Posterior vena cava (tissue), 2 donors: ENCODE measurements at regions of chr18 and their contacts with region 1.

Region 1: DNA sequence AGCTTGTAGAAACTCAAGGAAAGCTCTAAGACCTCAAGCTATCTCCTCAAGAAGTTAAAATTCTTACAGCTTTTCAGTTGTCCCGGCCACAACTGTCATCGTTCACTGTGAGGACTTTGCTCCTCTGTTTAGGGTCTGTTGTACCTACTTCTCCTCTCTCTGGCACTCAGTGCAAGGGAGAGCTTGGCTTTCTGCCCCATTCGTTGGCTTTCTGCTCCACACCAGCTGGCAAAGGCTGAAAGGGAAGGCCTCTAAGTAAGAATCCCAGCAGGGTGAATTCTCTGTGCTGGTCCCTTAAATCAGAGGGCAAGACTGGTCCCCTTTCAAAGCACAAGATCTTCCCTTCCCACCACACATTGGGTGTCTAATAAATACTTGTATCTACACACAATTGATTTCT is 17.3 kb downstream of the ZBTB7C start:
- DNase-seq: no peak

Region 2: DNA sequence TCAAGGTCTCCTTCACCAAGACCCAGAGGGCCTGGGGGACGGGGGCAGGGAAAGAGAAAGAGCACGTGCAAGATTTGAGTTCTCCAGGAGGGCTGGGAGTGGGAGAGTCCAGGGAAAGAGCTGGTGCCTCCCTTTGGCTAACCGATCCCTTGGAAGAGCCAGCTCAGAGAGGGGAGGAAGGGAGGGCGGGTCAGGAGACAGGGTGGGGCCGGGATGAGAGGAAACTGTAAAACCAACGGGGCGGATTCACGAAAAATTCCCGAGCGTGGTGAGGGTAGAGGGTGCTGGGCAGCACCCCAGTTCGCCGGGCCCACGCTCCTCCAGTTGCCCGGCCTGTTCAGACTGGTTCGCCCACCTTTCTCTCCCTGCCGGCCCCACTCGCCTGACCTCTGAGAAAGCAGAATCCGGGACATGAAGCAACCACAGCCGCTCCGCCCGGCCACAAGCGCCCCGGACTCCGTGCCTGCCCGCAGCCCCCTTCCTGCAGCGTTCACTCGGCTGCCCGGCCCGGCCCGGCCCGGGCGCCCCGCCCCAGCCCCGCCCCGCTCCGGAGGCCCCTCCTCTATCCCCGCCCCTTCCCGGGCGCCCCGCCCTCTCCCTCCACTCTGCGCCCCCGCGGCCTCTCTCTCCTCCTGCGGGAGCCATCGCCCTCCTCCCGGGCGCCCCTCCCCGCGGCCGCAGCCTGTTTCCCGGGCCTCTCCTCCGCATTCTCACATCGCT is 230.5 kb before region 1 on chr18:
- intact Hi-C with region 1: loop called in 1 of 2 experiments (anchors 10 kb)
- DNase-seq: peak; percentile 94

Region 3: GRCh38 chr18:48868468-48869466 is 476.9 kb after region 1 on chr18:
- intact Hi-C with region 1: no loop called
- DNase-seq: peak; percentile 73

Region 4: DNA sequence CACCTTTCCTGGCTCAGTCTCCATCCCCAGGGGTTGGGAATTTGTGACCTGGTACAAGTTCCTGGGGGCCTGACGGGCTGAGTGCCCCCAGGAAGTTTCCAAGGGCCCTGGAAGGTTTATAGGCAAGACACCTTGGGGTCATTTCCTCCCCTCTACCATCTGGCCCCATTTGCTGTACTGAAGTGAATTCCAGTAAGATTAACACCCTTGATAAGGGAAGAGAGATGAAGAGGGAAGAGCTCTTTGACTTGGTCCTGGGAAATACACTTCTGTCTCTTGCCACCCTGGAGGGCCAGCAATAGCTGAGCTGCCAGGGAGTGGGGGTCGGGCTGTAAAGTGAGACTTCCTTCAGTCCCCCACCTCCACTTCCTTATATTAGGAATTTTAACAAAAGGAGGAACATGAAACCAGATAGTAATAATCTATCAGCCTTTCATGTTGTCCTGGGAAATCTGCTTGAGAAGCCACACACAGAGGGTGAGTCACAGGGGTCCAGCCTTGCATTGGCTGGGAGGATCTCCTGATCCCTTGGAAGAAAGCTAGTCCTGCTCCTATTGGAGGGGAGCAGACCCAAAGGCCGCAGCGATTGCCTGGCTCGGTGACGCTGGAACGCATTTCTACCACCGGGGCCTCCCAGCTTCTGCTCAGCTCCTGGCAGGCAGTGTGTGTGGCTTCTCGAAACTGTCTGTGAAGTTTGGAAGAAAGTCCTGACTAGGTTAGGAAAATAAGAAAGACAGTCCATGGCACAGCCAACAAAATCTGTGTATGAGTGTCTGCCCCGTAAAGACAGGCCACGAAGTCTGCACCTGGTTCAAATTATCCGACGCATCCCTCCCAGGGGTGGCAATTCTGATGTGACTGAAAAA is 1334.2 kb after region 1 on chr18:
- intact Hi-C with region 1: no loop called
- DNase-seq: peak; percentile 94